ENCODE measurements at regions of chr2 and their contacts with region 1.

Region 1: DNA sequence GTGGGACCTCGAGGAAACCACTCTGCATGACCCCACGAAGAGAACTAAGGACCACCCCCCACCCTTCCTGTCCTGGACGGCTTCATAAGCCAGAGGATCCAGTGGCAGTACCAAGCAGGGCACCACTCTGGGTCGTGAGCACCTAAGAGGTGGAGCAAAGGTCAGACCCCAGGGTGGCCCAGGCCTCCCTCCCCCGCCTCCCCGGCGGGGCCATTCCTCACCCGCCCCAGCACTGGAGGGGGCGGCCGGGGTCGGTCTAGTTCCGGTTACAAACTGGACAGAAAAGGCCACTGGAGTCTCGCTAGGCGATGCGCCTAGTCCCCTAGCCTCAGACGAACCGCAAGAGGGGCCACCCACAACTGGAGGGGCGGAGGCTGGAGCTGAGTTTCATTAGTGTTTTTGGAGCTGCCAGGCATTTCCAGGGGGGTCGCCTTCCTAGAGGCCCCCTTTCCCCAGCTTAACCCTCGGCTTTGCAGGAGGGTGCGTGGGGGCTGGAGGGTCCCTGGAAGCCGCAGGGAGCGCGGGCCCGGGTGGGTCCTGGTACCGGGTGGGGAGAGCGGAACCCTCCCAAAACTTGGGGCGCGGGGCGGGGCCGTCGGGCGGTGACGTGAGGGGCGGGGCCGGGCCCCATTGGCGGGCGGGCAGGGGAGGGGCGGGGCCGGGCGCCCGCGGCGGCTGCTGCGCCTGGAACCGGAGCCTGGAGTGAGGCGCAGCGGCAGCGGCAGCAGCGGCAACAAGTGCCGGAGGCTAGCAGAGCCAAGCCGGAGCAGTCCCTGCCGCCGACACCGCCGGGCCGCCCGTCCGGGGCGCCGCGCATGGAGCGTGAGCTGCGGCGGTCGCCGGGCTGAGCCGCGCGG is at the start of gene B3GNT2:
- DNase-seq: peak; percentile 85 to 94 (median 88)
- ATAC-seq: peak; percentile 76 to 93 (median 90)
- H3K4me3 ChIP-seq: peak within 1 kb of the TSS; percentile 86 to 99 (median 94)
- H3K27ac ChIP-seq: peak within 1 kb of the TSS; percentile 91 to 98 (median 96)
- H3K4me1 ChIP-seq: peaks cover 0 to 45% (median 32%) of the 10 kb centered on the region in 12 donors
- H3K27me3 ChIP-seq: no peaks in the 10 kb centered on the region
- CTCF ChIP-seq: no peak
- POLR2A ChIP-seq: peak; percentile 72 to 97
- total RNA-seq, gene B3GNT2: 13.8 to 26.5 (median 20.8) TPM

Region 2: GRCh38 chr2:61922714-61923113 is 272.9 kb before region 1 on chr2:
- intact Hi-C with region 1: loop called in 7 of 10 experiments (anchors 2 to 10 kb)
- DNase-seq: no peak
- ATAC-seq: no peak
- H3K4me3 ChIP-seq: no peak overlapping the region
- H3K27ac ChIP-seq: peak overlapping the region in 6 of 12 donors; percentile 2 to 70 (median 58)
- H3K4me1 ChIP-seq: peaks cover 0 to 42% (median 12%) of the 10 kb centered on the region in 12 donors
- H3K27me3 ChIP-seq: no peaks in the 10 kb centered on the region
- CTCF ChIP-seq: no peak
- POLR2A ChIP-seq: no peak

Region 3: GRCh38 chr2:61993444-61994024 is 202.1 kb before region 1 on chr2:
- intact Hi-C with region 1: loop called in 3 of 10 experiments (anchors 5 to 10 kb)
- DNase-seq: peak in 1 of 5 donors; percentile 19
- ATAC-seq: peak in 3 of 4 donors; percentile 67 to 83 (median 75)
- H3K4me3 ChIP-seq: no peak overlapping the region
- H3K27ac ChIP-seq: no peak overlapping the region
- H3K4me1 ChIP-seq: peaks cover 0 to 25% (median 3%) of the 10 kb centered on the region in 12 donors
- H3K27me3 ChIP-seq: no peaks in the 10 kb centered on the region
- CTCF ChIP-seq: peak; percentile 55 to 86 (median 69)
- POLR2A ChIP-seq: no peak

Region 4: GRCh38 chr2:62014102-62014501 is 181.5 kb before region 1 on chr2:
- intact Hi-C with region 1: loop called in 7 of 10 experiments (anchors 5 to 10 kb)
- DNase-seq: peak; percentile 74 to 88 (median 79)
- ATAC-seq: peak; percentile 98 to 99 (median 98)
- H3K4me3 ChIP-seq: no peak overlapping the region
- H3K27ac ChIP-seq: peak overlapping the region in 9 of 12 donors; percentile 24 to 74 (median 52)
- H3K4me1 ChIP-seq: peaks cover 0 to 28% (median 19%) of the 10 kb centered on the region in 12 donors
- H3K27me3 ChIP-seq: no peaks in the 10 kb centered on the region
- CTCF ChIP-seq: peak in 11 of 12 donors; percentile 10 to 68 (median 40)
- POLR2A ChIP-seq: no peak

Region 5: DNA sequence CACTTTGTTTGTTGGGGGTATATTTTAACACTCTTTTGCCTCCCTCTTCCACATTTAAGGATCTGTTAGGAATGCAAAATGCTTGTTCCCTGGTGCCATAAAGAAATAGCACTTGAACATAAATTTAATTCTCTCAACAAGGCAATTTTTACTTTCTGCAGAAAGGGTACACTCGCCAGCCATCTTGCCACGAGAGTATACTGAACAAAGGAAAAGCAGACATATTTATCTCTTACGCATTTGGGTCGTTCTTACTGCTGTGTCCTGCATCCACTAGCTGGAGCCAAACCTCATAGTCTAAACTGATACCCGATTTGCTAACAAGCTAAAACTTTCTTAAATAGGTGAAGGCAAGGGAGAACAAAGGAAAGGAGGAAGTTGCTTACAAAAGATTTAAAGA is 129.7 kb after region 1 on chr2:
- intact Hi-C with region 1: no loop called
- DNase-seq: no peak
- ATAC-seq: no peak
- H3K4me3 ChIP-seq: no peak overlapping the region
- H3K27ac ChIP-seq: no peak overlapping the region
- H3K4me1 ChIP-seq: no peaks in the 10 kb centered on the region
- H3K27me3 ChIP-seq: no peaks in the 10 kb centered on the region
- CTCF ChIP-seq: no peak
- POLR2A ChIP-seq: no peak

Region 6: GRCh38 chr2:62406573-62407043 is 211.0 kb after region 1 on chr2:
- intact Hi-C with region 1: loop called (anchors 2 to 10 kb)
- DNase-seq: no peak
- ATAC-seq: no peak
- H3K4me3 ChIP-seq: no peak overlapping the region
- H3K27ac ChIP-seq: no peak overlapping the region
- H3K4me1 ChIP-seq: peaks cover 5 to 45% (median 30%) of the 10 kb centered on the region in 12 donors
- H3K27me3 ChIP-seq: no peaks in the 10 kb centered on the region
- CTCF ChIP-seq: no peak
- POLR2A ChIP-seq: no peak